B cell (primary cell): ENCODE measurements at regions of chr5 and their contacts with region 1.

Region 1: GRCh38 chr5:56746553-56747339 is 68.6 kb upstream of the MAP3K1 start:
- DNase-seq: no peak
- ATAC-seq: no peak
- H3K4me3 ChIP-seq: no peak overlapping the region
- H3K4me3 Mint-ChIP-seq: no peak overlapping the region
- H3K27ac ChIP-seq: peak overlapping the region; percentile 71 to 84
- H3K27ac Mint-ChIP-seq: peak overlapping the region; percentile 79
- H3K4me1 ChIP-seq: peaks cover 37 to 45% of the 10 kb centered on the region in 2 donors
- H3K4me1 Mint-ChIP-seq: peaks cover 50% of the 10 kb centered on the region
- H3K27me3 ChIP-seq: no peaks in the 10 kb centered on the region
- H3K27me3 Mint-ChIP-seq: no peaks in the 10 kb centered on the region
- CTCF ChIP-seq: no peak

Region 2: DNA sequence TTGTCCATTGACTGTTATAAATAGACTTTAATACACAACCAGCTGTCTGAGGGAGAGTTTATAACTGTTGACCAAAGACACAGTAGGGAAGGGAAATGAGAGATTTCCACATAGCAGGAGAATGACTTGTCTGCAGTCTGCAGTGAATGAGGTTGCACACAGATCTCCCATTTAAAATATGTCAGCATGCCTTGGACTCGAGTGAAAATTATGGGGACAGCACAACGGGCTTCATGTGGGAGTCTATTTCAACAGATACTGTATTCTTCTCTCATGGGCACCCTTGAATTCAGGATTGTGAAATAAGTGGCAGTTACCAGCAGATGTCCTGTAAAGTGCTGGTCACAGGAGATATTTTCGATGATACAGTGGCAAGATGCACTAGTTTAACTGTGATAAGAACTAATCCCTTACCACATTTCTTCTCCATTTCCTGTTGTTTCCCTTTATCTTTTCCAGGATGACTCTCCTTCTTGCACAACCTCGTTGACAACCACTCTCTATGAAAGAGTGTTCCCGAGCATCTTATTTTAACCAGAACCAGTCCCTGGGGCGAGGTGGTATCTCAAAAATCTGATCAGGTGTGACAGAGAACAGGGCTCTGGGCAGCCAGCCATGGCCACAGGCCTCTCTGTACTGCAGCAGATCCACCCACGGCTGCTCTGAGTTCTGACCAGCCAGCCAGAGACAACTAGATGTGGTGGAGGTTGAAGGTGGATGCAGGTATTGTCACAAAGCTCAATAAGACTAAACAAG is 17.1 kb after region 1 on chr5:
- CTCF ChIA-PET with region 1: interaction called, 3 read pairs
- POLR2A ChIA-PET with region 1: interaction called, 6 read pairs
- intact Hi-C with region 1: loop called (anchors 2 kb)
- DNase-seq: peak; percentile 66
- ATAC-seq: peak; percentile 87
- H3K4me3 ChIP-seq: peak overlapping the region in 1 of 5 experiments; percentile 0
- H3K4me3 Mint-ChIP-seq: peak overlapping the region; percentile 52
- H3K27ac ChIP-seq: peak overlapping the region; percentile 56 to 60
- H3K27ac Mint-ChIP-seq: peak overlapping the region; percentile 61
- H3K4me1 ChIP-seq: peaks cover 63 to 69% of the 10 kb centered on the region in 2 donors
- H3K4me1 Mint-ChIP-seq: peaks cover 70% of the 10 kb centered on the region
- H3K27me3 ChIP-seq: no peaks in the 10 kb centered on the region
- H3K27me3 Mint-ChIP-seq: no peaks in the 10 kb centered on the region
- CTCF ChIP-seq: no peak